MCF 10A (cell line): ENCODE measurements at regions of chr1 and their contacts with region 1.

Region 1: GRCh38 chr1:51897699-51898031 is 19.1 kb upstream of the NRDC start:
- DNase-seq: peak; percentile 76
- H3K4me3 Mint-ChIP-seq: no peak overlapping the region
- H3K27ac Mint-ChIP-seq: no peak overlapping the region
- H3K4me1 Mint-ChIP-seq: peaks cover 25% of the 10 kb centered on the region
- H3K27me3 Mint-ChIP-seq: no peaks in the 10 kb centered on the region
- CTCF ChIP-seq: no peak

Region 2: GRCh38 chr1:51878616-51879336 is 18.9 kb before region 1 on chr1 and contains the start of gene NRDC:
- CTCF ChIA-PET with region 1: interaction called, 12 read pairs
- POLR2A ChIA-PET with region 1: interaction called, 11 read pairs
- intact Hi-C with region 1: no loop called
- DNase-seq: peak; percentile 100
- H3K4me3 Mint-ChIP-seq: no peak within 1 kb of the TSS
- H3K27ac Mint-ChIP-seq: no peak within 1 kb of the TSS
- H3K4me1 Mint-ChIP-seq: peaks cover 9% of the 10 kb centered on the region
- H3K27me3 Mint-ChIP-seq: peaks cover 15% of the 10 kb centered on the region
- CTCF ChIP-seq: no peak
- total RNA-seq, gene NRDC: 168 and 176 TPM in 2 replicates

Region 3: DNA sequence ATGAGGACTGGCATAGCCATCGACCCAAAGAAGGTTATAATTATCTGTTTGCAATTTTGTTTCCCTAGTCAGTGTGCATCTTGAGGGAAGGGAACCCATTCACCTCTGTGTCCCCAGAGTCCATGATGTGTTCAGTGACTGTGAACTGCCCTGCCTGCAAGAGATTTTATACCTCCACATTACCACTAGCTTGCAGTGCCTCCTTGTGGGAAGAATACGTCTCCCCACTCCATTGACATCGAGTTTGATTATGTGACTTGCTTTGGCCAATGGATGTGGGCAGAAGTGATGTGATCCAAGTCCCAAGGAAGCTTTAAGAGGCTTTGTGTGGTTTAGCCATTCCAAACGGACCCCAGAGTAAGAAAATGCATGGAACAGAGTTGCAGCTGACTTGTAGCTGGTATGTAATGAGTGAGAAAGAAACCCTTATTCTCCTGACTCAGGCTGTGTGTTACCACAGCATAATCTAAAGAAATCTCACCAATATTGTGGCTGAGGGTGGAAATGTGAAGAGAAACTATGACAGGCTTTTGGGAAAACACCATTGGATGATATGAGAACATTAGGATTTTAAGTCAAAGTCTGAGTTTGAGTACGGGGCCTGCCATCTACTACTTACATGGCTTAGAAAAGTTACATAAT is 28.6 kb after region 1 on chr1:
- CTCF ChIA-PET with region 1: interaction called, 7 read pairs
- POLR2A ChIA-PET with region 1: no interaction called
- intact Hi-C with region 1: loop called (anchors 1 kb)
- DNase-seq: peak; percentile 67
- H3K4me3 Mint-ChIP-seq: no peak overlapping the region
- H3K27ac Mint-ChIP-seq: no peak overlapping the region
- H3K4me1 Mint-ChIP-seq: no peaks in the 10 kb centered on the region
- H3K27me3 Mint-ChIP-seq: no peaks in the 10 kb centered on the region
- CTCF ChIP-seq: no peak

Region 4: DNA sequence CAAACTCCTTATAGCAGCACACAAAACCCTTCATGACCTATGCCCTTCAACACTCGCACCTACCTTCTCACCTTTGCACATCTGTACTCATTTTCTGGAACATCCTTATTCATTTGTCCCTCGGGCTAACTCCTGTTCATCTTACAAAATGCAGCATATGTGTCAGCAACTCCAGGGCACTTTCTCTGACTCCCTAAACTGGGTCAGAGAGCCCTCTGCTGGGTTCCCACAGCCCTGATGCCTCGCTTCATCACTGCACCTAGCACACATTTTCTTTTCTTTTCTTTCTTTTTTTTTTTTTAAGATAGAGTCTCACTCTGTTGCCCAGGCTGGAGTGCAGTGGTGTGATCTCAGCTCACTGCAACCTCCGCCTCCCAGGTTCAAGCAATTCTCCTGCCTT is 38.9 kb after region 1 on chr1:
- CTCF ChIA-PET with region 1: interaction called, 4 read pairs
- POLR2A ChIA-PET with region 1: no interaction called
- intact Hi-C with region 1: loop called (anchors 2 kb)
- DNase-seq: peak; percentile 39
- H3K4me3 Mint-ChIP-seq: no peak overlapping the region
- H3K27ac Mint-ChIP-seq: no peak overlapping the region
- H3K4me1 Mint-ChIP-seq: peaks cover 6% of the 10 kb centered on the region
- H3K27me3 Mint-ChIP-seq: no peaks in the 10 kb centered on the region
- CTCF ChIP-seq: peak; percentile 22

Region 5: GRCh38 chr1:51990478-51990965 is 92.9 kb after region 1 on chr1 and contains the start of gene RAB3B:
- CTCF ChIA-PET with region 1: interaction called, 17 read pairs
- POLR2A ChIA-PET with region 1: no interaction called
- intact Hi-C with region 1: no loop called
- DNase-seq: no peak
- H3K4me3 Mint-ChIP-seq: no peak within 1 kb of the TSS
- H3K27ac Mint-ChIP-seq: no peak within 1 kb of the TSS
- H3K4me1 Mint-ChIP-seq: no peaks in the 10 kb centered on the region
- H3K27me3 Mint-ChIP-seq: peaks cover 49% of the 10 kb centered on the region
- CTCF ChIP-seq: no peak
- total RNA-seq, gene RAB3B: 0.02 and 0.05 TPM in 2 replicates

Region 6: GRCh38 chr1:52002038-52002917 is 104.6 kb after region 1 on chr1:
- CTCF ChIA-PET with region 1: interaction called, 41 read pairs
- POLR2A ChIA-PET with region 1: interaction called, 4 read pairs
- intact Hi-C with region 1: loop called (anchors 1 kb)
- DNase-seq: peak; percentile 89
- H3K4me3 Mint-ChIP-seq: no peak overlapping the region
- H3K27ac Mint-ChIP-seq: no peak overlapping the region
- H3K4me1 Mint-ChIP-seq: no peaks in the 10 kb centered on the region
- H3K27me3 Mint-ChIP-seq: no peaks in the 10 kb centered on the region
- CTCF ChIP-seq: peak; percentile 90